ENCODE measurements at regions of chr20 and their contacts with region 1.

Region 1: GRCh38 chr20:5222919-5223634 is 93.7 kb downstream of the PROKR2 start:
- H3K4me3 ChIP-seq: no peak overlapping the region
- H3K27ac ChIP-seq: no peak overlapping the region
- H3K4me1 ChIP-seq: no peaks in the 10 kb centered on the region
- CTCF ChIP-seq: peak; percentile 42; the same call in 1 of the 2 replicates

Region 2: GRCh38 chr20:5008759-5009158 is 214.3 kb before region 1 on chr20:
- CTCF ChIA-PET with region 1: no interaction called
- POLR2A ChIA-PET with region 1: no interaction called
- H3K4me3 ChIP-seq: no peak overlapping the region
- H3K27ac ChIP-seq: no peak overlapping the region
- H3K4me1 ChIP-seq: no peaks in the 10 kb centered on the region; the same call in 1 of the 2 replicates
- CTCF ChIP-seq: no peak

Region 3: GRCh38 chr20:5080384-5080877 is 142.6 kb before region 1 on chr20:
- CTCF ChIA-PET with region 1: no interaction called
- POLR2A ChIA-PET with region 1: no interaction called
- H3K4me3 ChIP-seq: no peak overlapping the region
- H3K27ac ChIP-seq: no peak overlapping the region
- H3K4me1 ChIP-seq: peaks cover 5% of the 10 kb centered on the region; the same call in 1 of the 2 replicates
- CTCF ChIP-seq: no peak

Region 4: GRCh38 chr20:5168651-5169396 is 54.3 kb before region 1 on chr20:
- CTCF ChIA-PET with region 1: no interaction called
- POLR2A ChIA-PET with region 1: no interaction called
- H3K4me3 ChIP-seq: no peak overlapping the region
- H3K27ac ChIP-seq: no peak overlapping the region
- H3K4me1 ChIP-seq: peaks cover 15% of the 10 kb centered on the region
- CTCF ChIP-seq: no peak

Region 5: GRCh38 chr20:5234158-5234557 is 11.1 kb after region 1 on chr20:
- CTCF ChIA-PET with region 1: interaction called, 13 read pairs
- POLR2A ChIA-PET with region 1: no interaction called
- H3K4me3 ChIP-seq: no peak overlapping the region
- H3K27ac ChIP-seq: no peak overlapping the region
- H3K4me1 ChIP-seq: no peaks in the 10 kb centered on the region
- CTCF ChIP-seq: no peak